ENCODE measurements at regions of chr14 and their contacts with region 1.

Region 1: GRCh38 chr14:31106768-31107167 is 80.6 kb upstream of the STRN3 start:
- DNase-seq: no peak
- ATAC-seq: no peak
- H3K4me3 ChIP-seq: no peak overlapping the region
- H3K4me3 Mint-ChIP-seq: no peak overlapping the region
- H3K27ac ChIP-seq: peak overlapping the region in 1 of 2 donors; percentile 14
- H3K27ac Mint-ChIP-seq: peak overlapping the region; percentile 24
- H3K4me1 ChIP-seq: no peaks in the 10 kb centered on the region
- H3K4me1 Mint-ChIP-seq: no peaks in the 10 kb centered on the region
- H3K27me3 ChIP-seq: no peaks in the 10 kb centered on the region
- H3K27me3 Mint-ChIP-seq: no peaks in the 10 kb centered on the region
- CTCF ChIP-seq: no peak

Region 2: GRCh38 chr14:31038521-31039166 is 68.1 kb before region 1 on chr14:
- CTCF ChIA-PET with region 1: no interaction called
- POLR2A ChIA-PET with region 1: no interaction called
- intact Hi-C with region 1: no loop called
- DNase-seq: no peak
- ATAC-seq: no peak
- H3K4me3 ChIP-seq: no peak overlapping the region
- H3K4me3 Mint-ChIP-seq: no peak overlapping the region
- H3K27ac ChIP-seq: no peak overlapping the region
- H3K27ac Mint-ChIP-seq: no peak overlapping the region
- H3K4me1 ChIP-seq: no peaks in the 10 kb centered on the region
- H3K4me1 Mint-ChIP-seq: no peaks in the 10 kb centered on the region
- H3K27me3 ChIP-seq: no peaks in the 10 kb centered on the region
- H3K27me3 Mint-ChIP-seq: no peaks in the 10 kb centered on the region
- CTCF ChIP-seq: no peak

Region 3: DNA sequence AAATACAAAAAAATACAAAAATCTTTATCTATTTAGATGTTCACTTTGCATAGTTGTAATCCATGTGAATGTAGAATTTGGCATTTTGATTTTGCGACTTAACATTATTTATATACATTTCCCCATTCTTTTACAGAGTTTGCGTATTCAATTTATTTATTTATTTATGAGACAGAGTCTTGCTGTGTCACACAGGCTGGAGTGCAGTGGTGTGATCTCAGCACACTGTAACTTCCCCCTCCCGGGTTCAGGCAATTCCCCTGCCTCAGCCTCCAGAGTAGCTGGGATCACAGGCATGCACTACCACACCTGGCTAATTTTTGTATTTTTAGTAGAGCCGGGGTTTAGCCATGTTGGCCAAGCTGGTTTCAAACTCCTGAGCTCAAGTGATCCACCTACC is 55.3 kb before region 1 on chr14:
- CTCF ChIA-PET with region 1: no interaction called
- POLR2A ChIA-PET with region 1: no interaction called
- intact Hi-C with region 1: no loop called
- DNase-seq: no peak
- ATAC-seq: no peak
- H3K4me3 ChIP-seq: no peak overlapping the region
- H3K4me3 Mint-ChIP-seq: no peak overlapping the region
- H3K27ac ChIP-seq: no peak overlapping the region
- H3K27ac Mint-ChIP-seq: no peak overlapping the region
- H3K4me1 ChIP-seq: no peaks in the 10 kb centered on the region
- H3K4me1 Mint-ChIP-seq: no peaks in the 10 kb centered on the region
- H3K27me3 ChIP-seq: no peaks in the 10 kb centered on the region
- H3K27me3 Mint-ChIP-seq: no peaks in the 10 kb centered on the region
- CTCF ChIP-seq: no peak

Region 4: GRCh38 chr14:31142455-31143087 is 35.8 kb after region 1 on chr14:
- CTCF ChIA-PET with region 1: interaction called, 3 read pairs
- POLR2A ChIA-PET with region 1: interaction called, 3 read pairs
- intact Hi-C with region 1: loop called in 1 of 2 experiments (anchors 5 kb)
- DNase-seq: no peak
- ATAC-seq: no peak
- H3K4me3 ChIP-seq: no peak overlapping the region
- H3K4me3 Mint-ChIP-seq: no peak overlapping the region
- H3K27ac ChIP-seq: no peak overlapping the region
- H3K27ac Mint-ChIP-seq: no peak overlapping the region
- H3K4me1 ChIP-seq: no peaks in the 10 kb centered on the region
- H3K4me1 Mint-ChIP-seq: no peaks in the 10 kb centered on the region
- H3K27me3 ChIP-seq: no peaks in the 10 kb centered on the region
- H3K27me3 Mint-ChIP-seq: no peaks in the 10 kb centered on the region
- CTCF ChIP-seq: no peak

Measured in CD4-positive, alpha-beta T cell (primary cell).